ENCODE measurements at regions of chr9 and their contacts with region 1.

Region 1: GRCh38 chr9:33081128-33081851 is 4.8 kb upstream of the SMU1 start:
- DNase-seq: peak; percentile 74
- H3K4me3 ChIP-seq: no peak overlapping the region
- H3K27ac ChIP-seq: no peak overlapping the region
- H3K4me1 ChIP-seq: no peaks in the 10 kb centered on the region
- H3K27me3 ChIP-seq: no peaks in the 10 kb centered on the region
- CTCF ChIP-seq: peak; percentile 61

Region 2: DNA sequence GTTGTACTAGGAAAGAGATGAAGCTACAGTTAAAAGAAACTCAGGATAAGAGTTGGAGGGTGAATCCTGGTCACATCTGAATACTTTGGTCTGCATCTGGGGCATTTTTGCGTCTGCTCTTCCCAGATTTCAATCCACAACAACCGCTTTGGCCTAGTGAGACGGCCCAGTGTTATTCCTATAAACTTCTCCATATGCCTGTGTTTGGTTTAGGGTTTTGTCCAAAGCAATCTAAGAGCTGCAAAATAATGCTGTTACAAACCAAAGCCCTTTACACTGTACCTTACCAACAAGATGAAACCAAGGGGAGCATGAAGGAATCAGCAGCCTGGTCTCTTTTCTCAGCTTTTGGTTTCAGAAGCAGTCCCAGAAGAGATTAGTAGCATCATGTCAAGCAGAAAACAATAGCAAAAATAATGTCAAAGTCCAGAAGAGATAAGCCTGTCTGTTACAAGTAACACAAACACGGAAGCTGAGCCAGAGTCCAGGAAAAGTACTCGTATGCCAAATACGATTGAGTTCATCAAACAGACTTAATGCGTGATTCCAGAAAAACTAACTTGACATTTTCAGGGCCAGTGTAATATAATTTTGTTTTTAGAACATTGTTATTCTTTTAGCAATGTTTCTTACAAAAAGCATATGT is 1076.7 kb before region 1 on chr9:
- intact Hi-C with region 1: no loop called
- DNase-seq: no peak
- H3K4me3 ChIP-seq: no peak overlapping the region
- H3K27ac ChIP-seq: no peak overlapping the region
- H3K4me1 ChIP-seq: no peaks in the 10 kb centered on the region
- H3K27me3 ChIP-seq: no peaks in the 10 kb centered on the region
- CTCF ChIP-seq: no peak

Region 3: DNA sequence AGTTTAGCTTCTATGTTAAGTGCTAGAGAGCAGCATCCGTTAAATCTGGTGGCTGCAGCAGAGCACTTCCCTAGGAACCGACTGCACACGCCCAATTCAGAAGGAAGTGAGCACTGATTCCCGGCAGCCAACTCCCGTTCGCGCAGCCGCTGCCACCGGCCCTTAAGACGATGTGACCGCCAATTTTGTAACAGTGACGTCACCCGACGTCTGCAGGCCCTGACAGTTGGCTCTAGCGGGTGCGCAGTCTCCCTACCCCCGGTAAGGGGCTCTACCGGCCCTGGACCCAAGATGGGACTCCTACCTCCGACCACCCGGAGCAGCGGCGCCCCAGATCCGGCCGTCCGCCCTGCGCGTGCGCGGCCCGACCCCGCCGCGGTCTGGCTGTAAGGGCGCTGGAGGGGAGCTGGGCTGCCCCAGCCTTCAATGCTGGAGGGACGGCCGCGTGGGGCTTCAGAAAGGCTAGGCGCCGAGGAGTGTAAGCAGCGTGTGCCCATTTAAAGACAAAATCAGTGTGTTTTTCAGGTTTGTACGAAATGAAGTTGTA is 37.1 kb before region 1 on chr9:
- intact Hi-C with region 1: no loop called
- DNase-seq: peak; percentile 87
- H3K4me3 ChIP-seq: peak overlapping the region; percentile 45
- H3K27ac ChIP-seq: peak overlapping the region; percentile 83
- H3K4me1 ChIP-seq: no peaks in the 10 kb centered on the region
- H3K27me3 ChIP-seq: no peaks in the 10 kb centered on the region
- CTCF ChIP-seq: no peak

Region 4: GRCh38 chr9:33170464-33171415 is 89.5 kb after region 1 on chr9:
- intact Hi-C with region 1: loop called (anchors 2 kb)
- DNase-seq: peak; percentile 57
- H3K4me3 ChIP-seq: no peak overlapping the region
- H3K27ac ChIP-seq: no peak overlapping the region
- H3K4me1 ChIP-seq: no peaks in the 10 kb centered on the region
- H3K27me3 ChIP-seq: no peaks in the 10 kb centered on the region
- CTCF ChIP-seq: no peak

Region 5: DNA sequence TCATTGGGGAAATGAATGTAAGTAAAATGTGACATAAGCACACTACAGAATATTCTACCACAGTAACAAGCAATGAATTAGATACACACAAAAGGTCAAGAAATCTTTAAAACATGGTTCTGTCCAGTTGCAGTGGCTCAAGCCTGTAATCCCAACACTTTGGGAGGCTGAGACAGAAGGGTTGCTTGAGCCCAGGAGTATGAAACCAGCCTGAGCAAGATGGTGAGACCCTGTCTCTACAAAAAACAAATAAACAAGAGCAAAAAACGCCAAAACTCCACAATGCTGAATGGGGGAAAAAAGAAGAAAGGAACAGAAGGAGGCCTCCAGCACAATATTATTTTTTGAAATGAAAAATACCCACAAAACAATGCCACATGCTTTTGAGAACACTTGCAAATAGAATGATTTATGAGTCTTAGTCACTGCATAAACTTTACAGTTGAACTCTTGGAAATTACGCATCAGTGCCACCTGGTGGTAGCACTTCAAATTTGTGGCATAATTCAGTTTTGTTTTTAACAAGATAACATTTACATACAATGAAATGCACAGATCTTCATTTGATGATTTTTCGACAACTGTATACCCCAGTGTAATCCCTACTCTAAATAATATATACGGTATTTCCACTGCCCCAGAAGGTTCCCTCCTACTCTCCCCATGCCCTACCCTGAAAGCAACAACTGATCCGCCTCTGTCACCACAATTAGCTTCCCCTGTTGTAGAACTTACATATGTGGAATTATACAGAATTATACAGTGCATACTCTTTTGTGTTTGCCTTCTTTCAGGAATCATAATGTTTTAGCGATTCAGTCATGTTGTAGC is 144.2 kb after region 1 on chr9:
- intact Hi-C with region 1: loop called (anchors 2 kb)
- DNase-seq: peak; percentile 88
- H3K4me3 ChIP-seq: no peak overlapping the region
- H3K27ac ChIP-seq: no peak overlapping the region
- H3K4me1 ChIP-seq: no peaks in the 10 kb centered on the region
- H3K27me3 ChIP-seq: no peaks in the 10 kb centered on the region
- CTCF ChIP-seq: peak; percentile 72